ENCODE measurements at regions of chr1 and their contacts with region 1.

Region 1: GRCh38 chr1:34742667-34743270 is 12.1 kb upstream of the GJB5 start:
- DNase-seq: peak; percentile 58 to 86 (median 72)
- ATAC-seq: peak; percentile 76
- H3K4me3 ChIP-seq: no peak overlapping the region
- H3K4me3 Mint-ChIP-seq: no peak overlapping the region
- H3K27ac ChIP-seq: no peak overlapping the region
- H3K27ac Mint-ChIP-seq: no peak overlapping the region
- H3K4me1 ChIP-seq: no peaks in the 10 kb centered on the region
- H3K4me1 Mint-ChIP-seq: no peaks in the 10 kb centered on the region
- H3K27me3 ChIP-seq: no peaks in the 10 kb centered on the region
- H3K27me3 Mint-ChIP-seq: no peaks in the 10 kb centered on the region
- CTCF ChIP-seq: peak; percentile 87

Region 2: DNA sequence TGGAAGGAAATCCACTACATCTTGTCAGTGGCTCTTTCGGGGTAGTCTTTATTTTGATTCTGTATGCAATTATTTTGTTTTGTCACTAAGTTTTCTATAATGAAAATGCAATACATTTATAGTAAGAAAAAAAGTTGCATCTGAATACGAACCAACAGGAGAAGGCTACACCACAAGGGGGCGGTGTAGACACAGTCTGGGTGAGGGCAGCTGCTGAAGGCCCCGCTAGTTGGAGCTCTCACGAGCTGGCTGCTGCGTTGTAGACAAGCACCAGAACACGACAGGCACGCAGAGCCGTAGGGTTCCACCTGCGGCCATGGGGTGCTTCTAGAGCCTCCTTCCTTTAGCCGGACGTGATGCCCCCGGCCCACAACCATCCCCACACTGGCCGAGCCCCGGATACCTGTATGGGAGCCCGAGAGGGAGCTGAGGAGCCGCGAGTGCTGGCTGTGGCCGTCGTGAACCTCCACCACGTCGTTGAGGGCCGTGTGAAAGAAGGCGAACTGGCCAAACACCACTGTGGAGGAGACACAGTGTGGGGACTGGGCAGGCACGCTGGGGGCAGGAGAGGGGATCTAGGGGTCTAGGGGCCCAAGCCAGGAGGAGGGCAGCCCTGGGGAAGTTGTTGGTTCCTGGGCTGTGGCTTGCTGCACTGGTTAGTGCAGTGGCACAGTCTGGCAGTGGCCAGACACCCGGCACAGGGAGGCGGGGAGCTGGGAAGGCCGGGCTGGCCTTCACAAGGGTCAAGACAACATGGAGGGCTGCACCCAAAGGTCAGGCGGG is 1109.6 kb before region 1 on chr1:
- CTCF ChIA-PET with region 1: interaction called, 20 read pairs
- POLR2A ChIA-PET with region 1: no interaction called
- intact Hi-C with region 1: loop called in 1 of 2 experiments (anchors 1 kb)
- DNase-seq: peak; percentile 66 to 88 (median 81)
- ATAC-seq: peak; percentile 77
- H3K4me3 ChIP-seq: no peak overlapping the region
- H3K4me3 Mint-ChIP-seq: no peak overlapping the region
- H3K27ac ChIP-seq: no peak overlapping the region
- H3K27ac Mint-ChIP-seq: no peak overlapping the region
- H3K4me1 ChIP-seq: no peaks in the 10 kb centered on the region
- H3K4me1 Mint-ChIP-seq: peaks cover 2% of the 10 kb centered on the region
- H3K27me3 ChIP-seq: peaks cover 0 to 5% of the 10 kb centered on the region in 2 experiments
- H3K27me3 Mint-ChIP-seq: peaks cover 30% of the 10 kb centered on the region
- CTCF ChIP-seq: peak; percentile 98

Region 3: DNA sequence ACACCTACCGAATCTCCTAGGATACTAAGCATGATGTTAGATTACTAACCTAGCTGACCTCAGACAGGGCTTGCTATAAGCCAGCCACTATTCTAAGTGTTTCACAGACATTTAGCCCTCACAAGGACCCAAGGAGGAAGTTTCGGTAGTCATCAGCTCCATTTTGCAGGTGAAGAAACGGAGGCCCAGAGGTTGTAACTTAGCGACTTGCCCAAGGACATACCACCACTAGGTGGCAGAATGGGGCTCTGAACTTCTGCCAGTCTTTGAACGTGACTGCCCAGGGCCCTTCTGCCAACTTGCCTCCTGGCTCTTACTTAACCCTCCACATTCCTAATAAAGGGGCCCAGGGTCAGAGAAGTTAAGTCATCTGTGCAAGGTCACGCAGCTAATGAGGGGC is 282.6 kb before region 1 on chr1:
- CTCF ChIA-PET with region 1: interaction called, 20 read pairs
- POLR2A ChIA-PET with region 1: no interaction called
- intact Hi-C with region 1: loop called in 1 of 2 experiments (anchors 1 kb)
- DNase-seq: peak in 5 of 9 experiments; percentile 7 to 38 (median 36)
- ATAC-seq: no peak
- H3K4me3 ChIP-seq: no peak overlapping the region
- H3K4me3 Mint-ChIP-seq: no peak overlapping the region
- H3K27ac ChIP-seq: no peak overlapping the region
- H3K27ac Mint-ChIP-seq: no peak overlapping the region
- H3K4me1 ChIP-seq: no peaks in the 10 kb centered on the region
- H3K4me1 Mint-ChIP-seq: no peaks in the 10 kb centered on the region
- H3K27me3 ChIP-seq: no peaks in the 10 kb centered on the region
- H3K27me3 Mint-ChIP-seq: peaks cover 16% of the 10 kb centered on the region
- CTCF ChIP-seq: peak; percentile 33

Region 4: GRCh38 chr1:34754964-34755637 is 12.3 kb after region 1 on chr1 and contains the start of gene GJB5:
- CTCF ChIA-PET with region 1: interaction called, 27 read pairs
- POLR2A ChIA-PET with region 1: no interaction called
- intact Hi-C with region 1: no loop called
- DNase-seq: no peak
- ATAC-seq: no peak
- H3K4me3 ChIP-seq: no peak within 1 kb of the TSS
- H3K4me3 Mint-ChIP-seq: no peak within 1 kb of the TSS
- H3K27ac ChIP-seq: no peak within 1 kb of the TSS
- H3K27ac Mint-ChIP-seq: no peak within 1 kb of the TSS
- H3K4me1 ChIP-seq: no peaks in the 10 kb centered on the region
- H3K4me1 Mint-ChIP-seq: no peaks in the 10 kb centered on the region
- H3K27me3 ChIP-seq: no peaks in the 10 kb centered on the region
- H3K27me3 Mint-ChIP-seq: peaks cover 5% of the 10 kb centered on the region
- CTCF ChIP-seq: no peak
- total RNA-seq, gene GJB5: not detected

Region 5: GRCh38 chr1:34781071-34781843 is 38.5 kb after region 1 on chr1 and contains the start of gene GJB3:
- CTCF ChIA-PET with region 1: no interaction called
- POLR2A ChIA-PET with region 1: no interaction called
- intact Hi-C with region 1: no loop called
- DNase-seq: no peak
- ATAC-seq: no peak
- H3K4me3 ChIP-seq: no peak within 1 kb of the TSS
- H3K4me3 Mint-ChIP-seq: peak within 1 kb of the TSS; percentile 29
- H3K27ac ChIP-seq: no peak within 1 kb of the TSS
- H3K27ac Mint-ChIP-seq: no peak within 1 kb of the TSS
- H3K4me1 ChIP-seq: no peaks in the 10 kb centered on the region
- H3K4me1 Mint-ChIP-seq: peaks cover 2% of the 10 kb centered on the region
- H3K27me3 ChIP-seq: peaks cover 9 to 20% of the 10 kb centered on the region in 2 experiments
- H3K27me3 Mint-ChIP-seq: peaks cover 50% of the 10 kb centered on the region
- CTCF ChIP-seq: no peak
- total RNA-seq, gene GJB3: not detected

Measured in CD8-positive, alpha-beta T cell (primary cell).